ENCODE measurements at regions of chr1 and their contacts with region 1.

Region 1: GRCh38 chr1:95233737-95234500 is at the start of gene RWDD3:
- DNase-seq: peak; percentile 97
- H3K4me3 ChIP-seq: peak within 1 kb of the TSS; percentile 68 to 86 (median 80)
- H3K27ac ChIP-seq: peak within 1 kb of the TSS; percentile 79 to 91 (median 86)
- H3K4me1 ChIP-seq: peaks cover 0 to 50% (median 37%) of the 10 kb centered on the region in 4 donors
- H3K27me3 ChIP-seq: no peaks in the 10 kb centered on the region
- CTCF ChIP-seq: peak; percentile 39 to 94 (median 45)
- EP300 ChIP-seq: no peak
- POLR2A ChIP-seq: peak in 1 of 2 donors; percentile 20
- total RNA-seq, gene RWDD3: 11.1 to 22.2 (median 16.7) TPM

Region 2: GRCh38 chr1:94854458-94855306 is 379.2 kb before region 1 on chr1:
- intact Hi-C with region 1: loop called (anchors 2 kb)
- DNase-seq: peak; percentile 96
- H3K4me3 ChIP-seq: peak overlapping the region; percentile 29 to 49 (median 48)
- H3K27ac ChIP-seq: peak overlapping the region; percentile 80 to 90 (median 84)
- H3K4me1 ChIP-seq: peaks cover 0 to 25% (median 18%) of the 10 kb centered on the region in 4 donors
- H3K27me3 ChIP-seq: no peaks in the 10 kb centered on the region
- CTCF ChIP-seq: peak; percentile 87 to 99 (median 98)
- EP300 ChIP-seq: no peak
- POLR2A ChIP-seq: no peak

Region 3: GRCh38 chr1:95072532-95073419 is 161.1 kb before region 1 on chr1 and contains the start of gene ALG14:
- intact Hi-C with region 1: loop called (anchors 1 kb)
- DNase-seq: peak; percentile 97
- H3K4me3 ChIP-seq: peak within 1 kb of the TSS; percentile 59 to 76 (median 73)
- H3K27ac ChIP-seq: peak within 1 kb of the TSS; percentile 86 to 93 (median 92)
- H3K4me1 ChIP-seq: peaks cover 0 to 14% (median 10%) of the 10 kb centered on the region in 4 donors
- H3K27me3 ChIP-seq: no peaks in the 10 kb centered on the region
- CTCF ChIP-seq: no peak
- EP300 ChIP-seq: no peak
- POLR2A ChIP-seq: peak; percentile 85 to 93
- total RNA-seq, gene ALG14: 0.55 to 1.8 (median 1.1) TPM

Region 4: DNA sequence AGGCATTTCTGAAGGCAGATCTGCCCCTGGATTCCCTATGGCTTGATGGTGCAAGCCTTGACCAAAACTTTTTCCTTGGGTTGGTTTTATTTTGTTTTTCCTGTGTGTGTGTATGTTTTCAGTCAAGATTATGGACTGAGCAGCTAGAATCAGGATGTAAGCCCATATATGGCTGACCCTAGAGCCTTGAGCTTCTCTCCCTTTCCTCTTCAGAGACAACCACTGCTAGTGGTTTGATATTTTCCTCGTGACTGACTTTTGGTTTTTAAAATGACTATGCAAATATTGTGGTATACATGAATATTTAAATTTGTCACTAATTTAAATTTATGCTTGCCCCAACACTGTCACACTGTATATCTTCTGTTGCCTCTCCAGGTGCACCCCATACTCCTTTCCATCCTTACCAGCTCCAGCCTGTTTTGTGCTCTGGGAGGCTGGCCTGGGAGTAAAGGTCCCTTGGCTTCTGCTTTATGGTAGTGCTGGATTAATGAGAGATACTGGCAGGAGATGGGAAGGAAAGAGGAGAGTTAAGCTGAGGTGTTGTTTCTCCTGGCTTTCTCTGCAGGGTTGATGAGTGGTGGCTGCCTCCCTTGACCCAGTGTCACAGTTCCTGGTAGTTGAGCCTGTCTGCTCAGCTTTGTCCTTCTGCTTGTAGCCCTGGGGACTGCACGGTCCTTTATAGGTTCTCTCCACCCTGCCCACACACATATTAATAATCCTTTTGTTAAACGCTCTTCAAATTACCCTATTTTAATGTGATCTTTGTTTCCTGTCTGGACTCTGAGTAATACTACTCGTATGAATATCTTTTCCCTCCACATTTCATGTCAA is 44.5 kb after region 1 on chr1:
- intact Hi-C with region 1: no loop called
- DNase-seq: no peak
- H3K4me3 ChIP-seq: no peak overlapping the region
- H3K27ac ChIP-seq: no peak overlapping the region
- H3K4me1 ChIP-seq: no peaks in the 10 kb centered on the region
- H3K27me3 ChIP-seq: no peaks in the 10 kb centered on the region
- CTCF ChIP-seq: no peak
- EP300 ChIP-seq: no peak
- POLR2A ChIP-seq: no peak

Region 5: GRCh38 chr1:95407886-95408291 is 174.0 kb after region 1 on chr1:
- intact Hi-C with region 1: no loop called
- DNase-seq: no peak
- H3K4me3 ChIP-seq: no peak overlapping the region
- H3K27ac ChIP-seq: no peak overlapping the region
- H3K4me1 ChIP-seq: no peaks in the 10 kb centered on the region
- H3K27me3 ChIP-seq: no peaks in the 10 kb centered on the region
- CTCF ChIP-seq: no peak
- EP300 ChIP-seq: no peak
- POLR2A ChIP-seq: no peak